Endothelial cell of umbilical vein (primary cell): ENCODE measurements at regions of chr12 and their contacts with region 1.

Region 1: GRCh38 chr12:100200463-100201181 is at the start of gene ACTR6:
- DNase-seq: peak; percentile 96
- H3K4me3 ChIP-seq: peak within 1 kb of the TSS; percentile 74 to 99 (median 95)
- H3K27ac ChIP-seq: peak within 1 kb of the TSS; percentile 74
- H3K4me1 ChIP-seq: peaks cover 4% of the 10 kb centered on the region
- H3K27me3 ChIP-seq: no peaks in the 10 kb centered on the region
- CTCF ChIP-seq: no peak
- POLR2A ChIP-seq: peak; percentile 83
- total RNA-seq, gene ACTR6: 23.2 and 24.7 TPM in 2 replicates

Region 2: DNA sequence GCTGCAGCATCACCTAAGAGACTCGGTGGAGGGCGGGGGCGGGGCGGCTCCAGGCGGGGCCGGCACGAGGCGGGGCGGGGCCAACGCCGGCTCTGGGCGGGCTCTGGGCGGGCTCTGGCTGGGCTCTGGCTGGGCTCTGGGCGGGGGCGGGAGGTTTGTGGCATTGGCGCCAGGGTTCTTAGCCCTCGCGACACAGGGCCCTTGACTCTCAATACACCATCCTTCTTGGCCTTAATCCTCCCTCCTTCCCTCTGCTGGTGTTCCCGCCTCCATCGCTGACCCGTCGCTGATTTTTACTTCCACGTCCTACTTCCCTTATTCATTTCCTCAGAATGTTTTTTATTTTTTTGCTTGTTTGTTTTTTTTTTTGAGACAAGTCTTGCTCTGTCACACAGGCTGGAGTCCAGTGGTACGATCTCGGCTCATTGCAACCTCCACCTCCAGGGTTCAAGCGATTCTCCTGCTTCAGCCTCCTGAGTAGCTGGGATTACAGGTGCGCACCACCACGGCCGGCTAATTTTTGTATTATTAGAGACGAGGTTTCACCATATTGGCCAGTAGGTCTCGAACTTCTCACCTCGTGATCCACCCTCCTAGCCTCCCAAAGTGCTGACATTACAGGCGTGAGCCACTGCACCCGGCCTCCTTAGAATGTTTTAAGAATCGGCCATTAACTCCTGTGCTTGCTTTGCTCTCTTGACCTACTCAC is 57.6 kb before region 1 on chr12 and contains the start of gene BLTP3B:
- CTCF ChIA-PET with region 1: no interaction called
- POLR2A ChIA-PET with region 1: no interaction called
- dilution Hi-C with region 1: no loop called
- intact Hi-C with region 1: loop called (anchors 1 kb)
- DNase-seq: peak; percentile 78
- H3K4me3 ChIP-seq: peak within 1 kb of the TSS; percentile 64 to 97 (median 74)
- H3K27ac ChIP-seq: peak within 1 kb of the TSS; percentile 91
- H3K4me1 ChIP-seq: peaks cover 5% of the 10 kb centered on the region
- H3K27me3 ChIP-seq: no peaks in the 10 kb centered on the region
- CTCF ChIP-seq: no peak
- POLR2A ChIP-seq: peak; percentile 53
- total RNA-seq, gene BLTP3B: 16.0 and 17.9 TPM in 2 replicates

Region 3: DNA sequence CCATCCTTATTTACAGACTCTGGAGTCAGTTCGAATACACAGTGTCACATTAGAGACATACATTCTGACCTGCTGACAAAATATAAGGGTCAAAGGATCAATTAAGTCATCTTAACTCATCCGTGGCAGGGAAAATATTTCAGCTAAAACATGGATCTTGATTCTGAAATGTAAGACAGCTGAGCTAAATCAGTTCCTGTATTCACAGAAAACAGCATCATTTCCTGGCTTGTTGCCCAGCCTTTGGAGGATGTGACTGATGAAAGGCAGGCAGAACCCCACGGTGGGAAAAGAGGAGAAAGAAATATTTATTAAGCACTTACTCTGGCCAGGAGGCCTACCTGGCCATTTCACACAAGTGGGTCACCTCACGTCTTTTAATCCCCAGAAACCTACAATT is 474.8 kb after region 1 on chr12:
- CTCF ChIA-PET with region 1: no interaction called
- POLR2A ChIA-PET with region 1: no interaction called
- dilution Hi-C with region 1: no loop called
- intact Hi-C with region 1: no loop called
- DNase-seq: peak; percentile 85
- H3K4me3 ChIP-seq: no peak overlapping the region
- H3K27ac ChIP-seq: no peak overlapping the region
- H3K4me1 ChIP-seq: peaks cover 5% of the 10 kb centered on the region
- H3K27me3 ChIP-seq: peaks cover 0 to 3% of the 10 kb centered on the region in 2 experiments
- CTCF ChIP-seq: no peak
- POLR2A ChIP-seq: no peak

Region 4: DNA sequence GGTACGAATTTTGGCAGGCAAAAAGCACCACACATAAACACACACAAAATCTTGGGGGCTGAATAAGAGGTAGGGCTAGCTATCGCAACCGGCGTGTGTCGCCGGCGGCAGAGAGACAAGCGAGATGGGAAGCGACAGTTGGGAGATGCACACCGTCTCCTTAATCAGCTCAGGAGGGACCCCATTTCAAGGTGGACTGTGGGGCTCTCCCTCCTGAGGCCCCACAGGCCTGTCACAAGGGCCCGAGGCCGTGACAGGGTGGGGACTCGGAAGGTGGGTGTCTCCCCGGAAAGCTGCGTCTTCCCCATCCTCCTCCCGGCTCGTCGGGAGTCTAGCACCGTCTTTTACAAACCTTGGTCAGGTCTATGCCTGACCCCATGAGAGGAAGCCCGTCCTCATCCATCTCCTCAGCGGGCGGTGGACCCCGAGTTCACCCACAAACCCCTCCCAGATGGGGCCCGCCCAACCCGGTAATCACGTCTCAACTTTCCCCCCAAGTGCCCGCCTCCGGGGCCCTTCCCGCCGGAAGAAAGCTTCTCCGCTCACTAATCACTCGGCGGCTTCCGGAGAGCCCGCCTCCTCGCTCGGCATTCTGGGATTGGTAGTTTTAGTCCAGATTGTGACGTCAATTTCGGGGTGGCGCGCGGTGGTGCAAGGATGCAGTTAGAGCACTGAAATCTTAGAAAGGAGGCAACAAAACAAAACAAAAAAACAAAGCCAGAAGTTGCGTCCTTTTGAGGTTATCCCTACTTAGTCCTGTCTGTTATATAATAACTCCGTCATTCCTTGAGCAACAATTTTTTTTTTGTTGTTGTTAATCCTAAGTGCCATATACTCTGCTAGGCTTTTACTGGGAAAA is 1861.2 kb after region 1 on chr12 and contains the start of gene WASHC3:
- CTCF ChIA-PET with region 1: no interaction called
- POLR2A ChIA-PET with region 1: no interaction called
- dilution Hi-C with region 1: no loop called
- intact Hi-C with region 1: loop called (anchors 10 kb)
- DNase-seq: peak; percentile 93
- H3K4me3 ChIP-seq: peak within 1 kb of the TSS; percentile 66 to 94 (median 85)
- H3K27ac ChIP-seq: peak within 1 kb of the TSS; percentile 68
- H3K4me1 ChIP-seq: peaks cover 6% of the 10 kb centered on the region
- H3K27me3 ChIP-seq: no peaks in the 10 kb centered on the region
- CTCF ChIP-seq: no peak
- POLR2A ChIP-seq: peak; percentile 87
- total RNA-seq, gene WASHC3: 26.1 and 27.8 TPM in 2 replicates